Left cardiac atrium (tissue), 4 donors: ENCODE measurements at regions of chr20 and their contacts with region 1.

Region 1: GRCh38 chr20:44187051-44187762 is at the start of gene JPH2:
- DNase-seq: peak; percentile 66
- ATAC-seq: peak; percentile 80 to 83
- total RNA-seq, gene JPH2: 78.3 to 93.5 TPM

Region 2: GRCh38 chr20:44115762-44116644 is 71.2 kb before region 1 on chr20:
- intact Hi-C with region 1: loop called (anchors 2 to 5 kb)
- DNase-seq: no peak
- ATAC-seq: peak in 1 of 2 donors; percentile 10

Region 3: DNA sequence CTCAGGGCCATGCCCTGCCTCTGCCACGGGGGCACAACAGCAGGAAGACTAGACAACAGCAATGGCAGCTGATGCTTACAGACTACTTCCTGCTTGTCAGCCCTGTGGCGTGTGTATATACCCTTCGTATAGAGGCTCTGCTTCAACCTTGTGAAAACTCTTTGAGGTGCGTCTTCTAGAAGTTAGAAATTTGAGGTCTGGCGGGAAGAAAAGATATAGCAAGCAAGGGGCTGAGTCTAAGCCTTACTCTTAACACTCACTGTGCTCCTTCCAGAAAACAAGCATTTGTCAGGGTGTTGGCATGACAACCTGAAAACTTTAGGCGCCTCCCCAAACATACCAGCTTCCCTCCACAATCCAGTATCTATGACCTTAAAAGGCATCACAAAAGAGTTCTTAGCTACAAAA is 33.6 kb before region 1 on chr20:
- intact Hi-C with region 1: loop called in 1 of 2 experiments (anchors 5 kb)
- DNase-seq: no peak
- ATAC-seq: peak; percentile 45 to 75